Body of pancreas (tissue), 4 donors: ENCODE measurements at regions of chr22 and their contacts with region 1.

Region 1: DNA sequence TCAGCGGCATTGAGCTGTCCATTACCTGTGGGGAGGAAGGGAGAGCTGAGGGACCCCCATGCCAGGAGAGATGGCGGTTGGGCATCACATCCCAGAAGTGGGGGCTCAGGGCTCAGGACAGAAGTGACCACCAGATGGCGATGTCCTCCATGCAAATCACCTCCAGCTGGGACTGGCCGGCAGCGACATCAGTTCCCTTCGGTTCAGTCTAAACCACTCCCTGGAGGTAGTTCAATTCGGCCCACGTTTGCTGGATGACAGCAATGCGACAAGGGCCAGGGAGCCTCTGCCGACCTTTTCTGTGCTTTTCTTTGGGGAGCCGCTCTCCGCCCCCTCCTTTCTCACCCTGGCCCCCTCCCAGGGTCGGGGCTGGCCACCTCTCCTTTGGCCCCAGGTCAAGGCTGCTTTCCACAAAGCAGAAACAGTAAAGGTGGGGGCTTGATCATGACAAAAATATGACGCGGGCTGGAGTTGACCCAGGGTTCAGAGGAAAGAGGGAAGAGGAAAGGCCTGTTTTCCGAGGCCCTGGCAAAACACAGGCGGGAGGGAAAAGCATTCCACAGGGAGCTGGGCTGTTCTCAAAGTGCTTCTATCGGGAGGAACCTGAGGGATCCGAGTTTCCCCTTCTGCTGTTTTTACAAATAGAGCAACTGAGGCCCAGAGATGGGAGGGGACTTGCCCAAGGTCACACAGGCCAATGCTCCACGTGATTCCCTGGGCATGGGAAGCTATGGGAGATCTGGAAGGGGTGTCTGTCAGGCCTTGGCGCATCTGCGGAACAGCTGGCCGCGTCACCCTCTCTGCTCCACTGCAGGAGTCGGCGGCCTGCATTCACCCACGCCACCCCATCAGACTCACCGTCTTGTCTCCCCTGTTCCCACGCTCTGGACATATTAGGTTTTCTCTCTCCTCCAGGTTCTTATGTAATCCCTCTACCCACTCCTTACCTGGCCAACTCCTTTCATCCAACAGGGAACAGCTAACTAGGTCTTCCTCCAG is 54.7 kb downstream of the FBXO7 start:
- DNase-seq: peak; percentile 77 to 86 (median 84)
- ATAC-seq: peak; percentile 63
- H3K4me3 ChIP-seq: no peak overlapping the region
- H3K27ac ChIP-seq: peak overlapping the region in 2 of 4 donors; percentile 39 to 54
- H3K4me1 ChIP-seq: peaks cover 15% of the 10 kb centered on the region
- H3K27me3 ChIP-seq: no peaks in the 10 kb centered on the region
- CTCF ChIP-seq: peak; percentile 59 to 85 (median 79)
- POLR2A ChIP-seq: peak in 1 of 3 donors; percentile 11

Region 2: GRCh38 chr22:30547188-30547587 is 1982.1 kb before region 1 on chr22:
- intact Hi-C with region 1: no loop called
- DNase-seq: no peak
- ATAC-seq: no peak
- H3K4me3 ChIP-seq: no peak overlapping the region
- H3K27ac ChIP-seq: no peak overlapping the region
- H3K4me1 ChIP-seq: peaks cover 7% of the 10 kb centered on the region
- H3K27me3 ChIP-seq: no peaks in the 10 kb centered on the region
- CTCF ChIP-seq: no peak
- POLR2A ChIP-seq: no peak

Region 3: DNA sequence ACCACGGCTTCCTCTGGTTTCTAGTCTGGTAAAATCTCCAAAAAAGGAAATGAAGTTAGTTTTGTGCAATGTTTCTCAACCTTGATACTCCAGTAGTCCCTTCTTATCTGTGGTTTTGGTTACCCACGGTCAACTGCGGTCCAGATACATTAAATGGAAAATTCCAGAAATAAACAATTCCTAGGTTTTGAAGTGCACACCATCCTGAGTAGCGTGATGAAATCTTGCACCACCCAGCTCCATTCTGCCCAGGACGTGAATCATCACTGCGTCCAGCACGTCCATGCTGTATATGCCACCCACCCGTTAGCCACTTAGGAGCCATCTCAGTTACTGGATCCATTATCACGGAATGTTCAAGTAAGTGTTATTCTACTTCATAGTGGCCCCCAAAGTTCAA is 62.3 kb after region 1 on chr22:
- intact Hi-C with region 1: no loop called
- DNase-seq: no peak
- ATAC-seq: no peak
- H3K4me3 ChIP-seq: no peak overlapping the region
- H3K27ac ChIP-seq: no peak overlapping the region
- H3K4me1 ChIP-seq: no peaks in the 10 kb centered on the region
- H3K27me3 ChIP-seq: no peaks in the 10 kb centered on the region
- CTCF ChIP-seq: no peak
- POLR2A ChIP-seq: no peak

Region 4: GRCh38 chr22:32796865-32797573 is 267.7 kb after region 1 on chr22:
- intact Hi-C with region 1: loop called (anchors 10 kb)
- DNase-seq: peak; percentile 62 to 72 (median 68)
- ATAC-seq: peak; percentile 66
- H3K4me3 ChIP-seq: no peak overlapping the region
- H3K27ac ChIP-seq: no peak overlapping the region
- H3K4me1 ChIP-seq: peaks cover 9% of the 10 kb centered on the region
- H3K27me3 ChIP-seq: peaks cover 0 to 4% of the 10 kb centered on the region in 2 donors
- CTCF ChIP-seq: peak; percentile 65 to 89 (median 83)
- POLR2A ChIP-seq: no peak

Region 5: GRCh38 chr22:32985899-32986765 is 456.8 kb after region 1 on chr22:
- intact Hi-C with region 1: loop called (anchors 5 kb)
- DNase-seq: peak; percentile 64 to 75 (median 70)
- ATAC-seq: peak; percentile 78
- H3K4me3 ChIP-seq: no peak overlapping the region
- H3K27ac ChIP-seq: no peak overlapping the region
- H3K4me1 ChIP-seq: no peaks in the 10 kb centered on the region
- H3K27me3 ChIP-seq: no peaks in the 10 kb centered on the region
- CTCF ChIP-seq: peak; percentile 61 to 79 (median 71)
- POLR2A ChIP-seq: no peak

Region 6: GRCh38 chr22:33000342-33001280 is 471.3 kb after region 1 on chr22:
- intact Hi-C with region 1: loop called (anchors 5 kb)
- DNase-seq: peak; percentile 16 to 49 (median 35)
- ATAC-seq: peak; percentile 42
- H3K4me3 ChIP-seq: no peak overlapping the region
- H3K27ac ChIP-seq: no peak overlapping the region
- H3K4me1 ChIP-seq: no peaks in the 10 kb centered on the region
- H3K27me3 ChIP-seq: no peaks in the 10 kb centered on the region
- CTCF ChIP-seq: peak; percentile 55 to 76 (median 69)
- POLR2A ChIP-seq: no peak